Posterior vena cava (tissue), 2 donors: ENCODE measurements at regions of chr7 and their contacts with region 1.

Region 1: GRCh38 chr7:126682176-126682575 is 570.6 kb downstream of the GRM8 start:
- DNase-seq: no peak

Region 2: GRCh38 chr7:126716321-126716720 is 34.1 kb after region 1 on chr7:
- intact Hi-C with region 1: loop called in 1 of 2 experiments (anchors 2 kb)
- DNase-seq: no peak

Region 3: DNA sequence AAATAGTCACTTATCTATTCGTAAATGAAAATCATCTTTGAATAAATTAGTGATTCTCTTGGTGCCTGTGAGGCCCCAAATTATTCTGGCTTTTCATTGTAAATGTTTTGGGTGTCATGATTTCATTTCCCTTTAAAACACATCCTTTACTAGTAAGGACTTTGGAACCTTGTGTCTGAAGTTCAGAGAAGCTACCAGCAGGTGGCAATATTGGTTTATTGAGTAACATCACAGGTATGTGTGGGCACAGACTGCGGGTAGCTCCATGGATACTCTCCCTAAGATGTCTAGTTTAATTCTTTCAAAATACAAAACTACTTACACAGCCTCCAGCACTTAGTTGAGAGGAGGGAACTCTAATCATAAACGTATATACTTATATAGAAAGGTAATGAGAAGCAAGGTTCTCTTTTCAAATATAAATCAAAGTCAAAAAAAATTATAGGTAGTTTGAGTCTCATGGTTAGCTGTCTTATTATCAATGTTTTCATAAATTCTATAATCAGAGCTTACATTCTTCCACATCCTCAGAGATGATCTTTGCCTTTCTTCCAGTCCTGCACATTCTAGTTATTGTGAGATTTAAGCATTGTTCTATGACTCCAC is 121.0 kb after region 1 on chr7:
- intact Hi-C with region 1: no loop called
- DNase-seq: no peak